ENCODE measurements at regions of chr5 and their contacts with region 1.

Region 1: DNA sequence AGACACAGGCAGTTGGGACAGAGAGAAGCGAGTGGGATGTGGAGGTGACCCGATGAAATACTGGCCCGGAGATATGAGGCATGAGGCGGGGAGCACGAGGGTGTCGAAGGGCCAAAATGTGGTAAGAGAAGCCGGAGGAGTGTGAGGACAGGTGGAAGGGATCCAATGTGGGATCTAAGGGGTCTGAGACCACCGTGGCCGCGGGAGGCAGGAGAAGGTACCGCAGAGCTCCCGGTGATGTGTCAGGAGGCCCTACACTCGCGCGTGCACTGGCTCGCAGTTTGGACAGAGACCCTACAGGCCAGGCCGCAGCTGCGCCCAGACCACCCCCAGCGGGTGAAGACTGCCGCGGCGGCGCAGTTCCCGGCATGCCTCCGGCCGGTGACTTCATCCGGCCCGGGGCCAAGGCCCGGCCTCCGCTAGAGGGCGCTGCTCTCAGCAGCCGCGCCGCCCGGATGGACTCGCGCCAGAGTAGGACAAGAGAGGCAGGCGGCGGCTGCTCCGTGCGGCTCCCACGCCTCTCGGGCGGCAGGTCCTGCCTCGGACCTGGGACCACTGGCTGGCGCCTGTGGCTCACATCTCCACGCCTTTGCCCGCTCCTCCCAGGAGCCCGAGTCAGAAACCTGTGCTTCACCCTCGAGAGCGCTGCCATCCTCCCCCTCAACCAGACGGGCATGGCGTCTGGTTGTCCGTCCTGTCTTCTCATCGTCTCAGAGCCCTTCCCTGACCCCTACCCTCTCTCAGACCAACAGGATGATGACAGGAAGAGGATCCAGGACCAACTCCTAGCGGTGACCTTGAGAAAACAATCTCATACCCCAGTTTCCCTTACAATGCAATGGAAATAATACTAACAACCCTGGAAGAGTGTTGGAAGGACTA is 35.4 kb upstream of the STING1 start:
- DNase-seq: peak; percentile 94
- ATAC-seq: peak; percentile 84
- H3K4me3 ChIP-seq: peak overlapping the region; percentile 77
- H3K27ac ChIP-seq: no peak overlapping the region
- H3K4me1 ChIP-seq: peaks cover 11% of the 10 kb centered on the region
- H3K27me3 ChIP-seq: no peaks in the 10 kb centered on the region
- CTCF ChIP-seq: peak; percentile 92

Region 2: GRCh38 chr5:139422307-139422893 is 95.5 kb before region 1 on chr5:
- CTCF ChIA-PET with region 1: interaction called, 3 read pairs
- POLR2A ChIA-PET with region 1: no interaction called
- intact Hi-C with region 1: loop called (anchors 1 kb)
- DNase-seq: peak; percentile 76
- ATAC-seq: peak; percentile 74
- H3K4me3 ChIP-seq: no peak overlapping the region
- H3K27ac ChIP-seq: no peak overlapping the region
- H3K4me1 ChIP-seq: no peaks in the 10 kb centered on the region
- H3K27me3 ChIP-seq: no peaks in the 10 kb centered on the region
- CTCF ChIP-seq: peak; percentile 90

Region 3: GRCh38 chr5:139439013-139439903 is 78.7 kb before region 1 on chr5 and contains the start of gene DNAJC18:
- CTCF ChIA-PET with region 1: no interaction called
- POLR2A ChIA-PET with region 1: no interaction called
- intact Hi-C with region 1: loop called (anchors 5 kb)
- DNase-seq: peak; percentile 76
- ATAC-seq: peak; percentile 94
- H3K4me3 ChIP-seq: peak within 1 kb of the TSS; percentile 88
- H3K27ac ChIP-seq: peak within 1 kb of the TSS; percentile 50
- H3K4me1 ChIP-seq: peaks cover 16% of the 10 kb centered on the region
- H3K27me3 ChIP-seq: no peaks in the 10 kb centered on the region
- CTCF ChIP-seq: no peak
- total RNA-seq, gene DNAJC18: 3.2 and 4.4 TPM in 2 replicates

Region 4: GRCh38 chr5:139560752-139561654 is 43.1 kb after region 1 on chr5 and contains the start of gene UBE2D2:
- CTCF ChIA-PET with region 1: no interaction called
- POLR2A ChIA-PET with region 1: interaction called, 11 read pairs
- intact Hi-C with region 1: no loop called
- DNase-seq: peak; percentile 98
- ATAC-seq: peak; percentile 93
- H3K4me3 ChIP-seq: peak within 1 kb of the TSS; percentile 75
- H3K27ac ChIP-seq: peak within 1 kb of the TSS; percentile 71
- H3K4me1 ChIP-seq: peaks cover 12% of the 10 kb centered on the region
- H3K27me3 ChIP-seq: no peaks in the 10 kb centered on the region
- CTCF ChIP-seq: no peak
- total RNA-seq, gene UBE2D2: 98.7 and 104 TPM in 2 replicates

Region 5: DNA sequence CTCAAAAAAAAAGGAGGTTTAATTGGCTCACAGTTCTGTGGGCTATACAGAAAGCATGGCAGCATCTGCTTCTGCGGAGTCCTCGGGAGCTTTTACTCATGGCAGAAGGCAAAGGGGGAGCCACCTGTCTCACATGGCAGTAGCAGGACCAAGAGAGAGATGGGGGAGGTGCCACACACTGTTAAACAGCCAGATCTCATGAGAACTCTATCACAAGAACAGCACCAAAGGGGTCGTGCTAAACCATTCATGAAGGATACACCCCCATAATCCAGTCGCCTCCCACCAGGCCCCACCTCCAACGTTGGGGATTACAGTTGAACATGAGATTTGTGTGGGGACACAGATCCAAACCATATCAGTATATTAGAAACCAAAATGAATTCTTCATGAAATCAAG is 101.9 kb after region 1 on chr5:
- CTCF ChIA-PET with region 1: interaction called, 11 read pairs
- POLR2A ChIA-PET with region 1: no interaction called
- intact Hi-C with region 1: no loop called
- DNase-seq: no peak
- ATAC-seq: no peak
- H3K4me3 ChIP-seq: no peak overlapping the region
- H3K27ac ChIP-seq: no peak overlapping the region
- H3K4me1 ChIP-seq: no peaks in the 10 kb centered on the region
- H3K27me3 ChIP-seq: no peaks in the 10 kb centered on the region
- CTCF ChIP-seq: no peak

Region 6: GRCh38 chr5:139690064-139690802 is 172.3 kb after region 1 on chr5:
- CTCF ChIA-PET with region 1: no interaction called
- POLR2A ChIA-PET with region 1: no interaction called
- intact Hi-C with region 1: loop called (anchors 2 kb)
- DNase-seq: peak; percentile 69
- ATAC-seq: peak; percentile 78
- H3K4me3 ChIP-seq: no peak overlapping the region
- H3K27ac ChIP-seq: no peak overlapping the region
- H3K4me1 ChIP-seq: no peaks in the 10 kb centered on the region
- H3K27me3 ChIP-seq: no peaks in the 10 kb centered on the region
- CTCF ChIP-seq: peak; percentile 77

Measured in PC-3 (cell line).